ENCODE measurements at regions of chr7 and their contacts with region 1.

Region 1: DNA sequence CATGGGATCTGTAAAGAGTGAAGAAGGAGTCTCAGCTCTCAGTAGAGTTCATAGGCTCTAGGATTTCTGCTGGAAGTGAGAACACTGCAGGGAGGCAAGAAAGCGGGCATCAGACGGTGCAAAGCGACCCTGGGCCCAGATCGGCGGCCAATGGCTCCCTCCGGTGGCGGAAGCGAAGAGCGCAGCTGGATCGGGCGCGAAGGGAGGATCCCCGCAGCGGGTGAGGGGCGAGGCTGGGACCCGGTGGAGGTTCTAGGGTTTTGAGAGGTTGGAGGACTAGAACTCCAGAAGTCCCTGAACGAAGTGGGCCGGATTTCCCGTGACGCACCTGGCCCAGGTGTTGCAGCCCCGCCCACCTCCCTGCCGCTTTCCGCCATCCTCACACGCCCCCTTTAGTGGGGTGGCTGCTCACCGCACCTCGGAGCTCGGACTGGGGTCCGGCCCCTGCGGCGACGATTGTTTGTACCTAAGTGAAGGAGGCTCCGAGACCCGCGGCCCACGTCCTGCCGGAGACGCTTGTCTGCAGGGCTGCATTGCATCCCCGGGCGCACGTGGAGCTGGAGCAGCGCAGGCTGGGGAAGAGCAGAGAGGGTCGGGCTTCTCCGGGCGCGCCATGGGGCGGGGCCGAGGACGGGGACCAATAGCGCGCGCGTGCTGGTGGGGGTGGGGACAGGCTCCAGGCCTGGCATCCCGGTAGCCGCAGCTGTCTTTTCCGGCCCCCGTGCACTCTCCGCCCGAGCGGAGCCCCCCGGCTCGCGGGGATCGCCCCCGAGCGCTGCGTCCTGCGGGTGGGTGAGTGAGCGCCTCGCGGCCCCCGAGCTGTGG is at the start of gene SLC12A9:
- H3K4me3 Mint-ChIP-seq: peak within 1 kb of the TSS; percentile 99
- H3K27ac Mint-ChIP-seq: peak within 1 kb of the TSS; percentile 93
- H3K4me1 Mint-ChIP-seq: peaks cover 46% of the 10 kb centered on the region
- H3K27me3 Mint-ChIP-seq: no peaks in the 10 kb centered on the region

Region 2: DNA sequence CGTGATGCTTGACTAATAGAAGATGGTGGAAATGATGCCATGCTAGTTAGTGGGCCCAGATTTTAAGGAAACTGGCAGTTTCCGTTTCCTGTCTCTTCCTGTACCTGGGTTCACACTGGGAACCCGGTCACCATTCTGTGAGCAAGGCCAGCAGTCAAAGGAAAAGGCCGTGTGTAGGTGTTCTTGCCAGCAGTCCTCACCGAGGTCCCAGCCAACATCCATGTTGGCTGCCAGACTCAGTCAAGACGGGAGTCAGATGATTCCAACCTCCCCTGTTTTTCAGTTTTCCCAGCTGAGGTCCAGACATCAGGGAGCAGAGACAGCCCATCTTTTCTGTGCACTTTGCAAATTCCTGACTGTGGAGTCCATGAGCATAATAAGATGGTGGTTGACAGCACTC is 509.5 kb before region 1 on chr7:
- intact Hi-C with region 1: no loop called
- H3K4me3 Mint-ChIP-seq: no peak overlapping the region
- H3K27ac Mint-ChIP-seq: no peak overlapping the region
- H3K4me1 Mint-ChIP-seq: peaks cover 13% of the 10 kb centered on the region
- H3K27me3 Mint-ChIP-seq: no peaks in the 10 kb centered on the region

Region 3: DNA sequence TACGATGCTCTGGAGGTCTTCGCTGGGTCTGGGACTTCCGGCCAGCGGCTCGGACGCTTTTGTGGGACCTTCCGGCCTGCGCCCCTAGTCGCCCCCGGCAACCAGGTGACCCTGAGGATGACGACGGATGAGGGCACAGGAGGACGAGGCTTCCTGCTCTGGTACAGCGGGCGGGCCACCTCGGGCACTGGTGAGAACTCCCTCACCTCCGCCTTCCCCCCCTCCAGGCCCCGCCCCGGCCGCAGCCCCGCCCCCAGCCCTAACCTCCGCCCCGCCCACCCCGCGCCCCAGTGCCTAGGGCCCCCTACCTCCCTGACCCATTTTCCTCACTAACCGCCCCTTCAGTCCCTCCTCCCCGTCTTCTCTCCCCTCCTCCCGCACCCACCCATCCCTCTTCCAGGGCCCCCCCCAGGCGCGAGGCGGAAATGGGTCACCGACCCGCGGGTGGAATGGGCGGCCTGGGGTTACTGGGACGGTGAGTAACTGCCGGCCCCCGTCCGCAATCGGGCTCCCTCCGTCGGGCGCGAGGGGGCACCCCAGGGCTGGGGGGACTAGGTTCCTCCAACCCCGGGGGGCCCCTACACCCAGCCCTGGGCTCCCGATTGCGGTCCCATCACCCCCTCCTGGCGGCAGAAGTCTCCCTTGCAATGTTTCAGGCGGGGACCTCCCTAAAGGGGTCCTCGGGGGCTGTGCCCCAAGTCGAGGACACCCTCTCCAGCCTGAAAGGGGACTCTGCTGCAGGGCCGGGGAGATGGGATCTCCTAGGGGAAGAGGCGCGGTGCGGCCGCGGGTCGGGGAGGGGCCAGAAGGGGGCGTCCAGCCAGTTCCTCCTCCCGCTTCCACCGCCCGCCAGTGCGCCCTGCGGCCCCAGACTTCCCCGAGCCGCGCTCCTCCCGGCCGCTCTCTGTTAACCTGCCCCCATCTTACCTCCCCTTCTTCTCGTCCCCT is 248.0 kb before region 1 on chr7:
- intact Hi-C with region 1: no loop called
- H3K4me3 Mint-ChIP-seq: peak overlapping the region; percentile 81
- H3K27ac Mint-ChIP-seq: peak overlapping the region; percentile 43
- H3K4me1 Mint-ChIP-seq: peaks cover 37% of the 10 kb centered on the region
- H3K27me3 Mint-ChIP-seq: peaks cover 57% of the 10 kb centered on the region

Region 4: DNA sequence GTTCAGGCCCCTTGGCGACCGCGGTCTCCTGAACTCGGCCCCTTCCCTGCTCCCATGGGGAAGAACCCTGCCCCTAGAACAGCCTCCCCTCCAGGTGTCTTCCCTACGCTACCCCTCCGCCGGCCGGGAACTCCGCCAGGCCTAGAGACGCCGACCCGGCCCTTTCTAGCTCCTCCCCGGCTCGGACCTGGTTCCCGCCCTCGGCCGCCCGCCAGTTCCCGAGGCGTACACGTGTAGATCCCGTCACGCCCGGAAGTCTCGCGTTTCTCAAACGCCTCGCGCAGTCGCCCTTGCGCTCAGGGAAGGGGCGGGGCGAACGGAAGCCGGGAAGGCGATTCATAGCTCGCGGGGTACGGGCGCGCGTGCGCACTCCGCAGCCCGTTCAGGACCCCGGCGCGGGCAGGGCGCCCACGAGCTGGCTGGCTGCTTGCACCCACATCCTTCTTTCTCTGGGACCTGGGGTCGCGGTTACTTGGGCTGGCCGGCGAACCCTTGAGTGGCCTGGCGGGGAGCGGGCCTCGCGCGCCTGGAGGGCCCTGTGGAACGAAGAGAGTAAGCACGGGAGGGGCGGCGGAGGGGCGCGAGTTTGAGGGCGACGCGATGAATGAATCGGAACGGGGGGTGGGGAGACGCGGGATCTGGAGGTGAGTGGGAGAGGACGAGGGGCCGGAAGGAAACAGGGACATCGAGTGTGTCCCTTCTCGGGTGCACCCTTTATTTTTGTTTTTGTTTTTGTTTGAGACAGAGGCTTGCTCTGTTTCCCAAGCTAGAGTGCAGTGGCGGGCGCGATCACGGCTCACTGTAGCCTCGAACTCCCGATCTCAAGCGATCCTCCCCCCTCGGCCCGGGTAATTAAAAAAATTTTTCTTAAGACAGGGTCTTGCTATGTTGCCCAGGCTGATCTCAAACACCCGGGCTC is 146.2 kb before region 1 on chr7 and contains the start of gene POP7:
- intact Hi-C with region 1: loop called (anchors 5 kb)
- H3K4me3 Mint-ChIP-seq: peak within 1 kb of the TSS; percentile 97
- H3K27ac Mint-ChIP-seq: peak within 1 kb of the TSS; percentile 98
- H3K4me1 Mint-ChIP-seq: peaks cover 27% of the 10 kb centered on the region
- H3K27me3 Mint-ChIP-seq: peaks cover 9% of the 10 kb centered on the region

Region 5: GRCh38 chr7:100803398-100804233 is 48.6 kb before region 1 on chr7:
- intact Hi-C with region 1: loop called (anchors 1 kb)
- H3K4me3 Mint-ChIP-seq: peak overlapping the region; percentile 58
- H3K27ac Mint-ChIP-seq: peak overlapping the region; percentile 88
- H3K4me1 Mint-ChIP-seq: peaks cover 48% of the 10 kb centered on the region
- H3K27me3 Mint-ChIP-seq: peaks cover 21% of the 10 kb centered on the region

Region 6: DNA sequence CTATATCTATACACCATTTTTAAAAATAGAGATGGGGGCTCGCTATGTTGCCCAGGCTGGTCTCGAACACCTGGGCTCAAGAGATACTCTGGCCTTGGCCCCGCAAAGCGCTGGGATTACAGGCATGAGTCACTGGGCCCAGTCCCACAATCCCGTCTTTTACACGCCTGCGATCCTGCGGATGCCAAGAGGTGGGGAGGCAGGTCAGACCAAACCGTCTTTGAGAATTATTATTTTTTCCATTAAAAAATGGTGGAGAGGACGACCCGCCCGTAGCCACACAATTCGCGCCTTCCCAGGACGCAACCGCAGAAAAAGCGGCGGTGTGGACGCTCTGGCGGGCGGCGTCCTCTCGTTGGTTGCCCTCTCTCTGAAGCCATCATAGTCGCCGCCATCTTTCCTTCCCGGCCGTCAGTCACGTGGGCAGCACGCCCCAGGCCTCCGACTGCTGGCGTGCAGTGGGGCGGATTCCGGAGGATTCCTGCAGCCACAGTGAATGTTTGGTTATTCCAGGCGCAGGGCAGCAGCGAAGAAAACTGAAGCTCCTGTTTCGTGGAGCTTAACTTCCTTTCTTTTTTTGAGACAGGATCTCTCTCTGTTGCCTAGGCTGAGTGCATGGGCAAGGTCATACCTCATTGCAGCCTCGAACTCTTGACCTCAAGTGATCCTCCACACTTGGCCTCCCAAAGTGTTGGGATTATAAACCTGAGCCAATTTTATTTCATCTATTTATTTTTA is 15.0 kb before region 1 on chr7:
- intact Hi-C with region 1: loop called (anchors 1 kb)
- H3K4me3 Mint-ChIP-seq: peak overlapping the region; percentile 58
- H3K27ac Mint-ChIP-seq: peak overlapping the region; percentile 68
- H3K4me1 Mint-ChIP-seq: peaks cover 18% of the 10 kb centered on the region
- H3K27me3 Mint-ChIP-seq: peaks cover 8% of the 10 kb centered on the region

Region 7: DNA sequence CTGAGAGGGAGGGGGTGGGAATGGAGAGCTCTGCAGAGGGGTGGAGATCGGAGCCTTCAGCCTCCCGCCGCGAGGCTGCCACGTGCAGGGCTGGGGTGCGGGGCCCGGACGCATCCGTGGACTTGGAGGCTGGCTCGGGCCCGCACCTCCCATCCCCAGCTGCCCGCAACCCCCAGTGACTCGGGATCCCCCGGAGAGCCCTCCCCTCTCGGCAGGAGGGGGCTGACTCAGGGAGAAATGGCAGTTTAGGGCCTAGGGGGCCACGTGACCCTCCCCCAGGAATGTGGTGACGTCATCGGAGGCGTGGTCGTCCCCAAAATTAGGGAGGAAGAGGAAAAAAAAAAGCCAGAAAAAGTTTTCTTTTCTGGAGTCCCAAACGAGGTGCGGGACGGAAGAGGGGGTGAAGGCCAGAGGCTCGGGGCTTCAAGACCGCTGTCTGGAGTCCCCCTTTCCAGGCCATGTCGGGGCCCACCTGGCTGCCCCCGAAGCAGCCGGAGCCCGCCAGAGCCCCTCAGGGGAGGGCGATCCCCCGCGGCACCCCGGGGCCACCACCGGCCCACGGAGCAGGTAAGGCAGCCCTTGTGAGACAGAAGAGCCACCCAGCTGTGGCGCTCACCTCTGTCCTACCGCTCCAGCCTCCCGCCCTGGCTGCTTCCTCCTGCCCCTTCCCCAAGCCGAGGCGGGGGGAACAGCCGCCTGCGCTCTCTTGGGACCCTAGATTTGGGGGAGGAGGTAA is 14.9 kb after region 1 on chr7 and contains the start of gene TRIP6:
- intact Hi-C with region 1: loop called (anchors 2 kb)
- H3K4me3 Mint-ChIP-seq: peak within 1 kb of the TSS; percentile 88
- H3K27ac Mint-ChIP-seq: peak within 1 kb of the TSS; percentile 91
- H3K4me1 Mint-ChIP-seq: peaks cover 78% of the 10 kb centered on the region
- H3K27me3 Mint-ChIP-seq: no peaks in the 10 kb centered on the region

Measured in dendritic cell treated with granulocyte-macrophage colony-stimulating factor and Interleukin-4, amounts not matched to agents 40 ng/mL and 50 ng/mL, for 4 days (primary cell).